OCI-LY7 (cell line): ENCODE measurements at regions of chr13 and their contacts with region 1.

Region 1: GRCh38 chr13:94209117-94209516 is 270.4 kb downstream of the DCT start:
- DNase-seq: no peak
- H3K4me3 ChIP-seq: no peak overlapping the region
- H3K27ac ChIP-seq: no peak overlapping the region
- H3K4me1 ChIP-seq: no peaks in the 10 kb centered on the region
- CTCF ChIP-seq: no peak

Region 2: DNA sequence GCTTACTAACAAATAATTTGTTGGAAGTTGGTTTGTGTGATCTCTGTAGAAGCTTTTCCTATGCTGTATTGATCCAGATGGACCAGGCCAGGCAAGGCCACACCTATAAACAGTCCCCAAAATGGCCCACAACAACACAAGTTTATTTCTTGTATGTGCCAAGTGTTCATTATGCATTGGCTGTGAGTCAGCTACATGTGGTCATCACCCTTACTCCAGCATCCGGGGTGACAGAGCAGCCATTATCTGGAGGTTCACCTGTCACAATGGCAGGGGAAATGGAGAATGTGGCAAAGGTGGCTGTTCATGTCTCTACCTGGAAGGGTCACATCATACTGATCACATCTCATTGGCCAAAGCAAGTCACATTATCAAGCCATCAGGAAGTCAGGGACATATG is 106.1 kb after region 1 on chr13:
- CTCF ChIA-PET with region 1: no interaction called
- POLR2A ChIA-PET with region 1: interaction called, 11 read pairs
- intact Hi-C with region 1: no loop called
- DNase-seq: no peak
- H3K4me3 ChIP-seq: no peak overlapping the region
- H3K27ac ChIP-seq: no peak overlapping the region
- H3K4me1 ChIP-seq: no peaks in the 10 kb centered on the region
- CTCF ChIP-seq: no peak